ENCODE measurements at regions of chr18 and their contacts with region 1.

Region 1: GRCh38 chr18:9913526-9914333 is at the start of gene VAPA:
- DNase-seq: peak; percentile 95
- ATAC-seq: peak; percentile 87
- H3K4me3 Mint-ChIP-seq: peak within 1 kb of the TSS; percentile 91
- H3K27ac Mint-ChIP-seq: peak within 1 kb of the TSS; percentile 91
- H3K4me1 Mint-ChIP-seq: peaks cover 22% of the 10 kb centered on the region
- H3K27me3 Mint-ChIP-seq: peaks cover 16% of the 10 kb centered on the region
- total RNA-seq, gene VAPA: 125 to 129 TPM

Region 2: GRCh38 chr18:9925369-9925768 is 11.6 kb after region 1 on chr18:
- POLR2A ChIA-PET with region 1: interaction called, 12 read pairs
- DNase-seq: no peak
- ATAC-seq: no peak
- H3K4me3 Mint-ChIP-seq: no peak overlapping the region
- H3K27ac Mint-ChIP-seq: no peak overlapping the region
- H3K4me1 Mint-ChIP-seq: peaks cover 36% of the 10 kb centered on the region
- H3K27me3 Mint-ChIP-seq: no peaks in the 10 kb centered on the region